Esophagus squamous epithelium (tissue), 5 donors: ENCODE measurements at regions of chr12 and their contacts with region 1.

Region 1: GRCh38 chr12:27511031-27511722 is 12.8 kb upstream of the PPFIBP1 start:
- DNase-seq: no peak
- H3K4me3 ChIP-seq: no peak overlapping the region
- H3K27ac ChIP-seq: no peak overlapping the region
- H3K4me1 ChIP-seq: peaks cover 0 to 13% (median 3%) of the 10 kb centered on the region in 3 donors
- H3K27me3 ChIP-seq: no peaks in the 10 kb centered on the region
- CTCF ChIP-seq: no peak
- POLR2A ChIP-seq: no peak

Region 2: GRCh38 chr12:27434673-27435565 is 76.3 kb before region 1 on chr12:
- intact Hi-C with region 1: loop called (anchors 10 kb)
- DNase-seq: no peak
- H3K4me3 ChIP-seq: no peak overlapping the region
- H3K27ac ChIP-seq: no peak overlapping the region
- H3K4me1 ChIP-seq: peaks cover 0 to 9% (median 0%) of the 10 kb centered on the region in 3 donors
- H3K27me3 ChIP-seq: no peaks in the 10 kb centered on the region
- CTCF ChIP-seq: peak; percentile 13 to 69 (median 36)
- POLR2A ChIP-seq: no peak

Region 3: DNA sequence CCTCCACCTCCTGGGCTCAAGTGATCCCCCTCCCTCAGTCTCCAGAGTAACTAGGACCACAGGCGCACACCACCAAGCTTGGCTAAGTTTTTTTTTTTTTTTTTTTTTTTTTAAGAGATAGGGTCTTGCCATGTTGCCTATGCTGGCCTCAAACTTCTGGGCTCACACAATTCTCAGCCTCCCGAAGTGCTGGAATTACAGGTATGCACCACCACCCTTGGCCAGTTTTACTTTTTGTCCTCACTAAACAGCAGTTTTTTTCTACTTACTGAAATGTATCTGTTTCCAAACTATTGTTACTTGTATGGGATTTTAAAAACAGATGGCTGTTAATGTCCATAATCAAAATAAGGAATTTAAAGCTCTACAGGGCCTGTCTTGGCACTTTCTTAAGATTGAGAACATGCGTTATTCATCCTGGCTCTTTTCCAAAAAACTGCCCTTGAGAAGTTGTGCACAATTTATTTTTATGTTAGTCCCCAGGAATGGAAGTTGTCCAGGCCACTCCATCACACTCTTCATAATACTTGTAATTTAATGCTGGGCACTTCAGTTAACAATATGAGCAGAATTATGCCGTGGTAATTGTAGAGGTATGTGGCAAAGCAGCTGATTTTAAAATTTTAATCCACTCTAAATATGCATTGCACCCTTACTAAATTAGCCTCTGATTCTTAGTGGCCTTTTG is 133.1 kb after region 1 on chr12:
- intact Hi-C with region 1: loop called (anchors 10 kb)
- DNase-seq: no peak
- H3K4me3 ChIP-seq: no peak overlapping the region
- H3K27ac ChIP-seq: no peak overlapping the region
- H3K4me1 ChIP-seq: peaks cover 0 to 25% (median 4%) of the 10 kb centered on the region in 3 donors
- H3K27me3 ChIP-seq: no peaks in the 10 kb centered on the region
- CTCF ChIP-seq: no peak
- POLR2A ChIP-seq: no peak